ENCODE measurements at regions of chr2 and their contacts with region 1.

Region 1: GRCh38 chr2:27016801-27017325 is 15.9 kb upstream of the TMEM214 start:
- DNase-seq: no peak
- ATAC-seq: peak; percentile 72
- H3K4me3 ChIP-seq: no peak overlapping the region
- H3K27ac ChIP-seq: no peak overlapping the region
- H3K4me1 ChIP-seq: peaks cover 14% of the 10 kb centered on the region
- H3K27me3 ChIP-seq: no peaks in the 10 kb centered on the region
- CTCF ChIP-seq: peak; percentile 85

Region 2: GRCh38 chr2:26778501-26778900 is 238.4 kb before region 1 on chr2:
- CTCF ChIA-PET with region 1: no interaction called
- POLR2A ChIA-PET with region 1: no interaction called
- in situ Hi-C with region 1: no loop called
- intact Hi-C with region 1: no loop called
- DNase-seq: no peak
- ATAC-seq: no peak
- H3K4me3 ChIP-seq: no peak overlapping the region
- H3K27ac ChIP-seq: no peak overlapping the region
- H3K4me1 ChIP-seq: peaks cover 5% of the 10 kb centered on the region; the same call in 1 of the 2 replicates
- H3K27me3 ChIP-seq: no peaks in the 10 kb centered on the region
- CTCF ChIP-seq: no peak

Region 3: GRCh38 chr2:26846328-26847306 is 170.2 kb before region 1 on chr2:
- CTCF ChIA-PET with region 1: interaction called, 31 read pairs
- POLR2A ChIA-PET with region 1: no interaction called
- in situ Hi-C with region 1: no loop called
- intact Hi-C with region 1: loop called (anchors 5 kb)
- DNase-seq: peak; percentile 35
- ATAC-seq: peak; percentile 76
- H3K4me3 ChIP-seq: no peak overlapping the region
- H3K27ac ChIP-seq: no peak overlapping the region
- H3K4me1 ChIP-seq: peaks cover 4% of the 10 kb centered on the region; the same call in 1 of the 2 replicates
- H3K27me3 ChIP-seq: peaks cover 30% of the 10 kb centered on the region
- CTCF ChIP-seq: peak; percentile 93

Region 4: GRCh38 chr2:26959331-26959730 is 57.5 kb before region 1 on chr2:
- CTCF ChIA-PET with region 1: interaction called, 55 read pairs
- POLR2A ChIA-PET with region 1: no interaction called
- in situ Hi-C with region 1: no loop called
- intact Hi-C with region 1: loop called (anchors 1 kb)
- DNase-seq: no peak
- ATAC-seq: no peak
- H3K4me3 ChIP-seq: no peak overlapping the region
- H3K27ac ChIP-seq: no peak overlapping the region
- H3K4me1 ChIP-seq: no peaks in the 10 kb centered on the region
- H3K27me3 ChIP-seq: peaks cover 19% of the 10 kb centered on the region
- CTCF ChIP-seq: no peak

Region 5: GRCh38 chr2:26968001-26968400 is 48.9 kb before region 1 on chr2:
- CTCF ChIA-PET with region 1: interaction called, 55 read pairs
- POLR2A ChIA-PET with region 1: interaction called, 4 read pairs
- in situ Hi-C with region 1: no loop called
- intact Hi-C with region 1: no loop called
- DNase-seq: no peak
- ATAC-seq: no peak
- H3K4me3 ChIP-seq: no peak overlapping the region
- H3K27ac ChIP-seq: no peak overlapping the region
- H3K4me1 ChIP-seq: peaks cover 12% of the 10 kb centered on the region
- H3K27me3 ChIP-seq: peaks cover 13% of the 10 kb centered on the region
- CTCF ChIP-seq: no peak

Region 6: GRCh38 chr2:27032495-27033252 is 15.8 kb after region 1 on chr2 and contains the start of gene TMEM214:
- CTCF ChIA-PET with region 1: interaction called, 10 read pairs
- POLR2A ChIA-PET with region 1: no interaction called
- in situ Hi-C with region 1: no loop called
- intact Hi-C with region 1: no loop called
- DNase-seq: no peak
- ATAC-seq: peak; percentile 100
- H3K4me3 ChIP-seq: peak within 1 kb of the TSS; percentile 81 to 94
- H3K27ac ChIP-seq: peak within 1 kb of the TSS; percentile 93
- H3K4me1 ChIP-seq: peaks cover 7% of the 10 kb centered on the region
- H3K27me3 ChIP-seq: no peaks in the 10 kb centered on the region
- CTCF ChIP-seq: no peak
- total RNA-seq, gene TMEM214: 77.8 TPM